ENCODE measurements at regions of chr12 and their contacts with region 1.

Region 1: GRCh38 chr12:55745361-55746146 is 2.6 kb downstream of the GDF11 start:
- DNase-seq: peak in 1 of 3 donors; percentile 32
- H3K4me3 ChIP-seq: peak overlapping the region in 4 of 7 experiments; percentile 19 to 91 (median 86)
- H3K27ac ChIP-seq: no peak overlapping the region
- H3K4me1 ChIP-seq: peaks cover 2 to 38% (median 27%) of the 10 kb centered on the region in 4 experiments
- H3K27me3 ChIP-seq: no peaks in the 10 kb centered on the region

Region 2: DNA sequence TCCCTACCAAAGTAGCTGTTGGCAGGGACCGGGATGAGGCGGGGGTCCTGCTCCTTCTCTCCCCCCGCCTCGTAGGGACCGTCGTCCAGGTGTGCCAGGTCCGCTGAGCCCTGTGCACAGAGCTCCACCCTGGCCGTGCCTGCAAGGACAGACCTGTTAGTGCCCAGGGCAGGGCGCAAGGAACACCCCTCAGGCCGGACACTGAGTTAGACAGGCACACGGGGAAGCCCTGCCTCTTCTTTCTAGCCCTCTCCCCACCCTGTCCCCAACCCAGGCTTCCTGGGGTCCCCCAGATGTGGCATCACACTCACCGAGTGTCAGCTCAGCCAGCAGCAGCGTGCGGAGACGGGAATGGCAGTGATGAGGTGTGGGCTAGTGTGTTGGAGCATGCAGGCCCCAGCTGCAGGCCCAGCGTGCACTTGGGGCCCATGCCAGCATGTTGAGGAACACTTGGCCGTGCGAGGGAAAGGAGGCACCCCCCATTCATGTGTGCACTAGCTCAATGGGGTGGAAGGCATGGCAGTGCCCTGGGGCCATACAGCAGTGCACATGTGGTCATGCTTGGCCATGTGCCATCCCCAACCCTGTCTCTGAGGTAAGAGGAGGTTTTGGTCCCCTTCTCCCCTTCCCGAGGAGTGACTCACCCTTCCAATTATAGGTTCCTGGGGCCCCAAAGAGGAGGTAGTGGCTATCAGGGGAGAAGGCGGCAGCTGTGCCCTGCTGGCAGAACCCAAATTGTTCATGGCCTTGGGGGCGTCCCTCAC is 45.1 kb before region 1 on chr12:
- CTCF ChIA-PET with region 1: no interaction called
- POLR2A ChIA-PET with region 1: no interaction called
- DNase-seq: peak in 1 of 3 donors; percentile 23
- H3K4me3 ChIP-seq: no peak overlapping the region
- H3K27ac ChIP-seq: no peak overlapping the region
- H3K4me1 ChIP-seq: peaks cover 0 to 7% (median 1%) of the 10 kb centered on the region in 4 experiments
- H3K27me3 ChIP-seq: no peaks in the 10 kb centered on the region

Region 3: DNA sequence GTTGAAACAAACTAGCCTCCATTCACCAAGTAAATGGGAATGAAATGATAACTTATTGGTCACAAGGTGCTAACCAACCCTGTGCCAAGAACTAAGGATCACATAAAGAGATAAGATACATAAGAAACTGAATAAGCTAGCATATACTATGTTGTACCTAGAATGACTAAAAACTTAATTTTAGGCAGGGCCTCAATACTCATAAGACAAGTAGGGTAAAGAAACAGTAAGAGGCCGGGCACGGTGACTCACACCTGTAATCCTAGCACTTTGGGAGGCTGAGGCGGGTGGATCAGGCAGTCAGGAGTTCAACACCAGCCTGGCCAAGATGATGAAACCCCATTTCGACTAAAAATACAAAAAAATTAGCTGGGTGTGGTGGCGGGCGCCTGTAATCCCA is 15.1 kb after region 1 on chr12:
- CTCF ChIA-PET with region 1: interaction called, 145 read pairs
- POLR2A ChIA-PET with region 1: no interaction called
- DNase-seq: no peak
- H3K4me3 ChIP-seq: no peak overlapping the region
- H3K27ac ChIP-seq: no peak overlapping the region
- H3K4me1 ChIP-seq: no peaks in the 10 kb centered on the region
- H3K27me3 ChIP-seq: no peaks in the 10 kb centered on the region

Region 4: DNA sequence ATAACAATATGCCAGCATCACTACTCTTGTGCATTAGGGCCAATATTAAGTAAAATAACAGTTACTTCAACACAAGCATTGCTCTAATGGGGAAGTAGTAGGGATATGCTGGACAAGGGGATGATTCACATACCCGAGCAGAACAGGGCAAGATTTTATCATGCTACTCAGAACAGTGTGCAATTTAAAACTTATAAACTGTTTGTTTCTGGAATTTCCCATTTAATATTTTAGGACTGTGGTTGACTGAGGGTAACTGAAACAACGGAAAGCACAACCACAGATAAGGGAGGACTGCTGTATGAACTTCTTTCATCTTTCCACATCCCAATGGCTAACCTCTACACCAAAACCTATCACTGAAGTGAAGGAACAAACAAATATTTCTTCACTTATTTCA is 35.1 kb after region 1 on chr12:
- CTCF ChIA-PET with region 1: interaction called, 12 read pairs
- POLR2A ChIA-PET with region 1: interaction called, 3 read pairs
- DNase-seq: peak; percentile 35 to 76 (median 75)
- H3K4me3 ChIP-seq: no peak overlapping the region
- H3K27ac ChIP-seq: peak overlapping the region; percentile 16 to 30
- H3K4me1 ChIP-seq: peaks cover 0 to 13% (median 0%) of the 10 kb centered on the region in 4 experiments
- H3K27me3 ChIP-seq: no peaks in the 10 kb centered on the region